Left cardiac atrium (tissue), 4 donors: ENCODE measurements at regions of chr3 and their contacts with region 1.

Region 1: DNA sequence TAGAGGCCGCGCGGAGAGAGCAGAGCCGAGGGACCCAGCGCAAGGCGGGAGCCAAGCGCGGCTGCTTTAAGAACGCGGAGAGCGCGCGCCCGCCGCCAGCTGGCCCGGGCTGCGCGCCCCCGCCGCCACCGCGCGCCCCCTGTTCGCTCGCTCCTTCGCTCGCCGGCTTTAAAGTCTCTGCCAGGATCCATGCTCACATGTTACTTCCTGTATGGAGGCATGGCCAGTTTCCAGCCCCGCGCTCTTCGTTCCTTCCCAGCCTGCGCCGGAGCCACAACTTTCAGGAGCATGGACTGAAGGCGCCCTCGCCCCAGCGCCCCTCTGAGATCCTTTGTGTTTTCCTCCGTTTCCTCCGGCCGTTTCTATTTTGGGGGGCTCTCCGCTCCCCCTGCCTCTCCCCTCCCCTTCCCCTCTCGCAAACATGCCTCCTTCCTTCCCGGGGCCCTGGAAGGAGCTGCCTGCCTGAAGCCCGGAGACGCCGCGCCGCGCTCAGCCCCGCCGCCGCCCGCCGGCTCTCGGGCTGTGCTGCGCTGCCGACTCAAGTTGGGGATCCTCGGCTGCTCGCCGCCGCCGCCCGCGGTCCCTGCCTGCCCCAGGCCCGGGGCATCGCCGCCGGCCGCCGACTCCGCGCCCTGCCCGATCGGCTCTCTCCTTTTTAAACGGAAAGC is at the start of gene PTPRG:
- DNase-seq: peak; percentile 93
- ATAC-seq: peak; percentile 84
- total RNA-seq, gene PTPRG: 37.6 to 46.9 TPM

Region 2: DNA sequence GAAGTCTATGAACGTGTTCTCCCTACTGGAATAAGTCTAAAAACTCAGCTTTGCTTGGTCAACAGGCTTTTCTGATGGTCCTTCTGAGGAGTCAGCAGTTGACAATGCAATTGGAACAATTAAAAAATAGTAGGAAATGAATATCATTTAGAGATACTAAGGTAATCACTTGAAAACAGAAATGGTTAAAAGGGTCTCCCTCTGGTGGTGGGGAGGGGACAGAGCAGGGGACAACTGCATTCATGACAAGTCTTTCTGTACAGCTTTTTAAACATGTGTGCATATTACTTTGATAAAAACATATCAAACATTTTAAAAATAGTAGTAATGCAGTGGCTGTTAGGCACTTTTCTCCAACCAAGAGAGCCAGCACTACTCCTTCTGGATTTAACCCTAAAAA is 190.4 kb before region 1 on chr3:
- intact Hi-C with region 1: no loop called
- DNase-seq: no peak
- ATAC-seq: no peak

Region 3: GRCh38 chr3:61417352-61417751 is 144.2 kb before region 1 on chr3:
- intact Hi-C with region 1: no loop called
- DNase-seq: no peak
- ATAC-seq: no peak

Region 4: GRCh38 chr3:61537366-61537765 is 24.1 kb before region 1 on chr3:
- intact Hi-C with region 1: no loop called
- DNase-seq: no peak
- ATAC-seq: peak; percentile 42 to 57

Region 5: GRCh38 chr3:61637088-61638051 is 75.9 kb after region 1 on chr3:
- intact Hi-C with region 1: loop called in 1 of 2 experiments (anchors 5 kb)
- DNase-seq: peak; percentile 39
- ATAC-seq: peak; percentile 78 to 90

Region 6: DNA sequence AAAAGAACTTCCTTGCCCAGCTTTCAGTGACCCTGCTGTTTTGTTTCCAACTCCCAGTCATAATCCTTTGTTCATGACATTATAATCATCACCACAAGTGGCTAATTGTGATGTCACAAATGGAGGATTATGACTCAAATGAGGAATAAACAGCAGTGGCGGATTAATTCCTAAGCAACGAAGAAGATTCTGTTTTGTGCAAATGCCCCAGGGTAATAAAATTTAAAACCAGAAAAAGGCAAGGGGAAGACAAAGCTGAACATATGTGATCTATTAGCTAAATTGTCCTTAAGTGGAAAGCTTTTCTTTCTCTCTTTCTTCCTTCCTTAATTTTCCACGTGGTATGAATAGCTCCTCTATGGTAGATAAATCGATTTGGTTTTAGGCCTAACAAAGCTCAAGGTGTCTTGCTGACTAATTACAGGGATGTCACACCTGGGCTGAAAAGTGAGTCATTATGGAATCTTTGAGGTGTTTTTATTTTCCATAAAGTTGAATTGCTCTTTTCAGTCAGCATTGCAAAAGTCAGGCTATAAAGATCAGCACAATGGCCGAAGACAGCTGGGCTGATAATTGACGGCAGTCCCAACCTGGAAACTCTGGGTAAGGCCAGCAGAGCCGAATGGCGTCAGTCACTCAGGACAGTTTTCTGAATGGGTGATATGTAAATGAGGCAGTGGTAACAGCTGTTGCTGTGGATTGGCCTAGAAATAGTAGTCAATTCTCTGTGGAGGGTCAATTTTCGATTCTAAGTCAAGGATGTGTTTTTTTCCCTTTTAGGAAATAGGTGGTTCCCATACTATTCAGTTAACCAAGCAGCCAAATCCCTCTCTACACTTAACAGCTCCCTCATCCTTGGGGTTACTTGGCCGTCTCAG is 121.4 kb after region 1 on chr3:
- intact Hi-C with region 1: loop called in 1 of 2 experiments (anchors 5 kb)
- DNase-seq: no peak
- ATAC-seq: peak in 1 of 2 donors; percentile 29

Region 7: GRCh38 chr3:61829750-61830400 is 268.4 kb after region 1 on chr3:
- intact Hi-C with region 1: loop called in 1 of 2 experiments (anchors 5 kb)
- DNase-seq: no peak
- ATAC-seq: peak; percentile 10 to 20

Region 8: DNA sequence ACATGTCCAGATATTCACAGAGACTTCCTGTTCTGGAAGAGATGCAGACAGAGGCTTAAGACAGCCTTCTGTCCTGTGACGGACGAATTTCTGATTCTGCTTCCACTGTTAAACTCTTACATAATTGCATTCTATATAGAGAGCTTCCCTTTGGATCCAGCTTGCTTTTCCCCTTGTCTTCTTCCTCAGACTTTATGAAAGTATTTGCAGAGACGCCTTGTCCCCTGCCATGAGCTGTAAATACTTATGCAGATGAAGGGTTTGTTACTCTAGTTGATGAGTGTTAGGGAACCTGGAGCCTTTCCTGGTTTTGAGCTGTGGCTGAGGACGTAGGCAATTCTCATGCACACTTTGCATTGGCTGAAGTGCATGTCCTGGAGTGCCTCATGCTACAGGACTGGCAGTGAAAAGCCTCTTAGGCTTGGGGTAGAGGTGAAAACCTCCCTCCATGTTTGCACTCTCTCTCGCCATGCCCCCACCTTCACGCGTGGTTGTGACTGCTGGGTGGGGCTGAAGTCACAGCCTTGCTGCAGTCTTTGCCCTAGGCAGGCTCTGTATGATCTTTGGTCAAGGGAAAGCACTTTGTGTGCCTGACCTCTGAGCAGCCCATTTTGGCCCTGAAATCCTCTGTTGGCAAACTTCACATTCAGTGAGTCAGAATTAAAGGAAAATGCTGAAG is 286.4 kb after region 1 on chr3:
- intact Hi-C with region 1: loop called (anchors 5 kb)
- DNase-seq: peak; percentile 77
- ATAC-seq: peak; percentile 83 to 92

Region 9: GRCh38 chr3:61927332-61927731 is 365.8 kb after region 1 on chr3:
- intact Hi-C with region 1: loop called in 1 of 2 experiments (anchors 10 kb)
- DNase-seq: peak; percentile 84
- ATAC-seq: peak; percentile 92 to 95

Region 10: GRCh38 chr3:62188681-62189383 is 627.3 kb after region 1 on chr3:
- intact Hi-C with region 1: loop called (anchors 5 to 10 kb)
- DNase-seq: peak; percentile 80
- ATAC-seq: peak; percentile 70 to 76